ENCODE measurements at regions of chr15 and their contacts with region 1.

Region 1: GRCh38 chr15:32704395-32704981 is 13.3 kb upstream of the GREM1 start:
- DNase-seq: peak; percentile 58
- ATAC-seq: peak; percentile 19
- H3K4me3 ChIP-seq: no peak overlapping the region
- H3K27ac ChIP-seq: peak overlapping the region; percentile 14; the same call in 1 of the 2 replicates
- H3K4me1 ChIP-seq: peaks cover 27% of the 10 kb centered on the region
- H3K27me3 ChIP-seq: peaks cover 3% of the 10 kb centered on the region; the same call in 1 of the 2 replicates
- CTCF ChIP-seq: no peak
- POLR2A ChIP-seq: no peak
- RAD21 ChIP-seq: no peak

Region 2: GRCh38 chr15:32675466-32675865 is 29.0 kb before region 1 on chr15:
- CTCF ChIA-PET with region 1: no interaction called
- POLR2A ChIA-PET with region 1: no interaction called
- dilution Hi-C with region 1: no loop called
- in situ Hi-C with region 1: no loop called
- intact Hi-C with region 1: loop called (anchors 2 kb)
- DNase-seq: no peak
- ATAC-seq: no peak
- H3K4me3 ChIP-seq: no peak overlapping the region
- H3K27ac ChIP-seq: no peak overlapping the region
- H3K4me1 ChIP-seq: peaks cover 6% of the 10 kb centered on the region
- H3K27me3 ChIP-seq: no peaks in the 10 kb centered on the region
- CTCF ChIP-seq: no peak
- POLR2A ChIP-seq: no peak
- RAD21 ChIP-seq: no peak

Region 3: GRCh38 chr15:32683906-32684584 is 20.4 kb before region 1 on chr15:
- CTCF ChIA-PET with region 1: no interaction called
- POLR2A ChIA-PET with region 1: no interaction called
- dilution Hi-C with region 1: no loop called
- in situ Hi-C with region 1: no loop called
- intact Hi-C with region 1: loop called (anchors 2 kb)
- DNase-seq: peak; percentile 95
- ATAC-seq: peak; percentile 65
- H3K4me3 ChIP-seq: no peak overlapping the region
- H3K27ac ChIP-seq: no peak overlapping the region; the same call in 1 of the 2 replicates
- H3K4me1 ChIP-seq: peaks cover 22% of the 10 kb centered on the region
- H3K27me3 ChIP-seq: no peaks in the 10 kb centered on the region
- CTCF ChIP-seq: no peak
- POLR2A ChIP-seq: 0 out of 2 replicates have a peak, but pooled peaks have one; percentile 24
- RAD21 ChIP-seq: no peak

Region 4: DNA sequence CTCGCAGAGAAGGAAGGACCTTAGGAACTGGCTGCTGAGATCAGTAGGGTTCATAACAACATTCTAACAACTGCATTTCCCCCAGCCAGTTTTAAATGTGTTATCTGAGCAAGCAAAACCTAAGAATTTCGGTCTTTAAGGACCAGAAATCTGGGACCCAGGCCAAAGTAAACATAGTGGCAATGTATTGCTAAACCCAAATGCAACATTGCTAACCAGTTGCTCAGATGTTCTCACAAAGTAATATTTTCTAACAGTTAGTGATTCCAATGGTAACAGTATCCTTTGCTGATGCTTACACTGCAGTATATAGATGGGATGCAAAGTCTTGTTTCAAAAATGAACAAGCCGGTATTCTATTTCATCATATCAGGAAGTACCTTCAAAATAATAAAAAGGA is 860.6 kb after region 1 on chr15:
- CTCF ChIA-PET with region 1: no interaction called
- POLR2A ChIA-PET with region 1: no interaction called
- dilution Hi-C with region 1: no loop called
- in situ Hi-C with region 1: no loop called
- intact Hi-C with region 1: no loop called
- DNase-seq: peak; percentile 44
- ATAC-seq: peak; percentile 27
- H3K4me3 ChIP-seq: no peak overlapping the region
- H3K27ac ChIP-seq: no peak overlapping the region
- H3K4me1 ChIP-seq: no peaks in the 10 kb centered on the region
- H3K27me3 ChIP-seq: no peaks in the 10 kb centered on the region
- CTCF ChIP-seq: no peak
- POLR2A ChIP-seq: no peak
- RAD21 ChIP-seq: no peak